ENCODE measurements at regions of chr17 and their contacts with region 1.

Region 1: DNA sequence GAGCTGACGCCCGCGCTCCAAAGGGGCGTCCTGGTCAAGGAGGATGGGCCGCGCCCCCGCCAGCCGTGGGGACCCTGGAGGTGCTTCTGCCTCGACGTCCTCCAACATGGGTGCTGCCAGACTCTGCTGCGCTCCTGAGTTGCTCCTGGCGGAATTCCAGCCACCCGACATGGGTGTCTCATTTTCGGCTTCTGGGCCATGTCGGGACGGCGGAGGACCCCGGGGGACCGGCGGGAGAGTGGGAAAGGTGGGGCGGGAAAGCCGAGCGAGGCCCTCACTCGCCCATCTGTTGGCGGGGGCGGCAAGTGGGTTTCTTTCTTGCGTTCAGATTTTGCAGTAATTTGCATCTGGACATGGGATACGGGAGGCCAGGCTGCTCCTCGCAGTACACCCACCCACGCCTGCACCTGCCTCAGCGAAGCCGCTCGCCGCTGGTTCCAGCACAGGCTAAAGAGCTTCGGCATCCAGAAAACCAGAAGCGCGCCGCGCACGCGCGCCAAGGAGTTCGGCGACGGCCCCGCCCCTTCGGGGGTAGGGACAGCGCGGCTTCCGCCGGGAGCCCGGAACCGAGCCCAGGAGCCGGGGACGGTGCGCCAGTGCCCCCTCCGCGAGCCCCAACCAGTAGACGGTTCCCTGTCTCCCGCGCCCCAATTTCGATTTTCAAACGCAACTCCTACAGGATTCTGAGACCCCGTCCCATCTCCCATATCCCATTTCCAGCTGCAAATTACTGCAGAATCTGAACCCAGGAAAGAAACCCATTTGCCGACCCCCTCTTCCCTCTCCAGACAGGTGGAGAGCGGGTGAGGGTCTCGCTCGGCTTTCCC is at the start of gene ARMC7:
- DNase-seq: peak; percentile 77 to 95 (median 91)
- ATAC-seq: peak; percentile 83
- H3K4me3 ChIP-seq: peak within 1 kb of the TSS; percentile 90 to 91
- H3K4me3 Mint-ChIP-seq: peak within 1 kb of the TSS; percentile 87
- H3K27ac ChIP-seq: peak within 1 kb of the TSS; percentile 42 to 75
- H3K27ac Mint-ChIP-seq: peak within 1 kb of the TSS; percentile 92
- H3K4me1 ChIP-seq: peaks cover 34% of the 10 kb centered on the region
- H3K4me1 Mint-ChIP-seq: peaks cover 33% of the 10 kb centered on the region
- H3K27me3 ChIP-seq: no peaks in the 10 kb centered on the region
- H3K27me3 Mint-ChIP-seq: no peaks in the 10 kb centered on the region
- CTCF ChIP-seq: no peak
- total RNA-seq, gene ARMC7: 2.0 to 3.0 TPM

Region 2: DNA sequence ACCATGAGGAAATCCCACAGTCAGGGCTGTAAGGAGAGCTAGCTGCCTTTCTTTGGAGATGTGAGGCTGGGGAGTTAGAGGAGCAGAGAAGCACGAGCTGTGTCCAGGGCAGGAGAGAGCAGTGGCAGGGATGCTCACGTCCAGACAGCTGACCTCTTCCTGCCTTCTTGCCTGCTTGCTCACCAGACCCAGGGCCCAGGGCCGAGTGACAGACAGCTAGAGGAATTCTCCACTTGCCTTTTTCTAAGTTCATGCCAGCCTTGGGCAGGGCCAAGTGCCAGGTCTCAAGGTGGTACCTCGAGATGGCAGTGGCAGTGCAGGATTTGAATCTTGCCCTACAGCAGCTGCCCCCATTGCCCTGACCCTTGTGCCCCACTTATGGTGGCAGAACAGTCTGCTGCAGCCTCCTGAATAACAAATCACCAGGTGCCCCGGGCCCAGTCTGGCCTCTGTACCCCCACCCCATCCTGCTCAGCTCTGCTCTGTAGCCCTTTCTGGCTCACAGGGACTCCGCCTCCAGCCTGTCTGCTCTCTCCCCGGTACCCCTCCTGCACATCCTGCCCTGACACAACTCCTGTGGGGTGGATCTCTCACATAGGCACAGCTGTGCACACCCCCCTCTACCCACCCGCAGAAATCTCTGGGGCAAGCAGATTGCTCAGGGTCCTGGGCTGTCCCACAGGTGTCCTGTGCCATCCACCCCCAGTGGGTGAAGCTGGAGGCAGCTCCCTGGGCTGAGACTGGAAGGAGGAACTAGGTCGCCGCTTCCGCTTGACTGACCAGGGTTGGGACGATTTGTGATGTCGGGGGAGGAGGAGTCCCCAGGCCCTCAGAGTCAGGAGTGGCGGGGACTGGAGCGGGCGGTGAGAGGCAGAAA is 275.9 kb before region 1 on chr17:
- CTCF ChIA-PET with region 1: no interaction called
- POLR2A ChIA-PET with region 1: no interaction called
- intact Hi-C with region 1: no loop called
- DNase-seq: no peak
- ATAC-seq: no peak
- H3K4me3 ChIP-seq: no peak overlapping the region
- H3K4me3 Mint-ChIP-seq: no peak overlapping the region
- H3K27ac ChIP-seq: no peak overlapping the region
- H3K27ac Mint-ChIP-seq: no peak overlapping the region
- H3K4me1 ChIP-seq: no peaks in the 10 kb centered on the region
- H3K4me1 Mint-ChIP-seq: no peaks in the 10 kb centered on the region
- H3K27me3 ChIP-seq: no peaks in the 10 kb centered on the region
- H3K27me3 Mint-ChIP-seq: no peaks in the 10 kb centered on the region
- CTCF ChIP-seq: no peak

Region 3: GRCh38 chr17:75046582-75047289 is 62.9 kb before region 1 on chr17 and contains the starts of genes ATP5PD and KCTD2:
- CTCF ChIA-PET with region 1: interaction called, 5 read pairs
- POLR2A ChIA-PET with region 1: interaction called, 6 read pairs
- intact Hi-C with region 1: loop called in 1 of 2 experiments (anchors 5 kb)
- DNase-seq: peak; percentile 81 to 97 (median 93)
- ATAC-seq: peak; percentile 91
- H3K4me3 ChIP-seq: peak within 1 kb of the TSS; percentile 99
- H3K4me3 Mint-ChIP-seq: peak within 1 kb of the TSS; percentile 99
- H3K27ac ChIP-seq: peak within 1 kb of the TSS; percentile 93 to 97
- H3K27ac Mint-ChIP-seq: peak within 1 kb of the TSS; percentile 98
- H3K4me1 ChIP-seq: peaks cover 21% of the 10 kb centered on the region
- H3K4me1 Mint-ChIP-seq: peaks cover 54% of the 10 kb centered on the region
- H3K27me3 ChIP-seq: no peaks in the 10 kb centered on the region
- H3K27me3 Mint-ChIP-seq: no peaks in the 10 kb centered on the region
- CTCF ChIP-seq: no peak
- total RNA-seq, gene ATP5PD: 69.9 to 71.6 TPM
- total RNA-seq, gene KCTD2: 29.4 to 31.7 TPM

Region 4: DNA sequence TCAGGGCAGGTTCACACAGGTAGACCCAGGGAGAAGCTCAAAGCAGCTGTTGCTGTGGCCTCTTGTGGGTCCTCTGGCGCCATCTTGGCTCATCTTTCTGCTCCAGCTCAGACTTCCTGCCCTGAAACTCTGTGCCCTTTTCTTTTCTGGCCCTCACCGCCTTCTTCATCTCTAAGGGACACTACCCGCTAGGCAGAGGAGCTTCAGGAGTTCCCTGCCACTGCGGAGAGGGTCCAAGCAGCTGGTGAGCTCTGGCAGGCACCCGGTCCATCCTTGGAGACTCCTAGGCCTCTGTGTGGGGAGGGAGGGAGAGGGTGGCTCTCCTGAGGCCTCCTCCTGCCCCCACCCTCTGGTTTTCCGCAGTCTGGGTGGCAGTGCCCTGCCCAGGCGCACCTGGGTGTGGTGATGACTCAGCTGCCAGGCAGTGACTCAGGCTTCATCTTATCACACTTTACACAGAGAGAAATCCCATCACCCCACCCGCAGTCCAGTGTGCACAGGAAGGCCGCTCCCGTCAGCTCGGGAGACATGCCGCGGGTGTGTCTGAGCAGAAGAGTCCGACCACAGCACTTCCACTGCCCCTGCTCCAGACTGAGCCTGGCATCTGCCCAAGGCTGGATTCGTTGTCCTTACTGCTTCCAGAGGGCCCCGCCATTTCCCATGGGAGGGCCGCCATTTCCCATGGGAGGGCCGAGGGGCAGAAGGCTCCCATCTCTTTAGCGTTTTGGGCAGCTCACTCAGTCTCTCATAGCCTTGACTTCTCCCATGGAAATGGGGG is 14.6 kb after region 1 on chr17:
- CTCF ChIA-PET with region 1: interaction called, 65 read pairs
- POLR2A ChIA-PET with region 1: interaction called, 32 read pairs
- intact Hi-C with region 1: no loop called
- DNase-seq: peak in 7 of 9 experiments; percentile 31 to 60 (median 38)
- ATAC-seq: peak; percentile 73
- H3K4me3 ChIP-seq: no peak overlapping the region
- H3K4me3 Mint-ChIP-seq: no peak overlapping the region
- H3K27ac ChIP-seq: no peak overlapping the region
- H3K27ac Mint-ChIP-seq: no peak overlapping the region
- H3K4me1 ChIP-seq: peaks cover 20% of the 10 kb centered on the region
- H3K4me1 Mint-ChIP-seq: peaks cover 21% of the 10 kb centered on the region
- H3K27me3 ChIP-seq: no peaks in the 10 kb centered on the region
- H3K27me3 Mint-ChIP-seq: no peaks in the 10 kb centered on the region
- CTCF ChIP-seq: no peak

Region 5: GRCh38 chr17:75173526-75173925 is 63.9 kb after region 1 on chr17:
- CTCF ChIA-PET with region 1: interaction called, 197 read pairs
- POLR2A ChIA-PET with region 1: interaction called, 27 read pairs
- intact Hi-C with region 1: loop called (anchors 1 kb)
- DNase-seq: no peak
- ATAC-seq: no peak
- H3K4me3 ChIP-seq: no peak overlapping the region
- H3K4me3 Mint-ChIP-seq: no peak overlapping the region
- H3K27ac ChIP-seq: no peak overlapping the region
- H3K27ac Mint-ChIP-seq: no peak overlapping the region
- H3K4me1 ChIP-seq: peaks cover 9% of the 10 kb centered on the region
- H3K4me1 Mint-ChIP-seq: peaks cover 19% of the 10 kb centered on the region
- H3K27me3 ChIP-seq: no peaks in the 10 kb centered on the region
- H3K27me3 Mint-ChIP-seq: no peaks in the 10 kb centered on the region
- CTCF ChIP-seq: no peak

Region 6: GRCh38 chr17:75238684-75239191 is 129.1 kb after region 1 on chr17:
- CTCF ChIA-PET with region 1: interaction called, 38 read pairs
- POLR2A ChIA-PET with region 1: no interaction called
- intact Hi-C with region 1: loop called (anchors 1 kb)
- DNase-seq: peak; percentile 24 to 78 (median 63)
- ATAC-seq: peak; percentile 47
- H3K4me3 ChIP-seq: no peak overlapping the region
- H3K4me3 Mint-ChIP-seq: no peak overlapping the region
- H3K27ac ChIP-seq: no peak overlapping the region
- H3K27ac Mint-ChIP-seq: peak overlapping the region; percentile 58
- H3K4me1 ChIP-seq: peaks cover 6% of the 10 kb centered on the region
- H3K4me1 Mint-ChIP-seq: peaks cover 24% of the 10 kb centered on the region
- H3K27me3 ChIP-seq: no peaks in the 10 kb centered on the region
- H3K27me3 Mint-ChIP-seq: no peaks in the 10 kb centered on the region
- CTCF ChIP-seq: peak; percentile 86

Region 7: DNA sequence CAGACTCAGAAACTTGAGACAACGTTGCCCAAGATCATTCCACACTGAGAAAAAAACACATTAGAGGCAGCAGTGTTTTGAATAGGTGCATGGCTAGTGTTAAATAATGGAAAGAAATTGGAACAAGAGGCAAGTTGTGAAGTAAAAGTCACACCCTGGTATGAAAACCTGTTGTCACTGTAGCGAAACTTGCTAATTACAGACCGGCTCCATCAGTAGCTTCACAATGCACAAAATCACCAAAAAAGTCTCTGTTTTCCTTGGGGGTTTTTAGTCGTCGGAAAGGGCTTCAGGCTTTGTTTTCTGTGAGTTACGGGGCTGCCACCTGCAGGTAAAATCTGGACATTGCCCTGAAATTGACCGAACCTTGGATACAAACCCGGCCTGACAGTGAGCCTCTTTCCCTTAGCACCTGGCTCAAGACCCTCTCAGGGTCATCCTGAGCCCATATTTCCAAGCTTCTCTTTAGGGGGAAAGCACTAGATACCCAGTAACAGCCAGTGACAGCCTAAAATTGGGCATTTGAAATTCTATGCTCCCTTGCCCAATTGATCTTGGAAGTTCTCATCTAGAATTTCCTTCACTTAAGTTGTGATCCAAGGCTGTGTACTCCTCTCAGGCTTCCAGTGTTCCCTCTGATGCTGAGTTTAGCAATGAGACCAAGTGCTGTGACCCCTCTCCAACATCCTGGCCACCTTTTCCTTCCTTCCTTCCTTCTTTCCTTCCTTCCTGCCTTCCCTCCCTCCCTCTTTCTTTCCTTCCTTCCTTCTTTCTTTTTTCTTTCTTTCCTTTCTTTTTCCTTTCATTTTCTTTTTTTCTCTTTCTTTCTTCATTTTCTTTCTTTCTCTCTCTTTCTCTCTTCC is 303.1 kb after region 1 on chr17:
- CTCF ChIA-PET with region 1: interaction called, 8 read pairs
- POLR2A ChIA-PET with region 1: interaction called, 4 read pairs
- intact Hi-C with region 1: loop called (anchors 1 kb)
- DNase-seq: peak; percentile 49 to 88 (median 73)
- ATAC-seq: peak; percentile 90
- H3K4me3 ChIP-seq: peak overlapping the region in 1 of 2 experiments; percentile 22
- H3K4me3 Mint-ChIP-seq: peak overlapping the region; percentile 72
- H3K27ac ChIP-seq: no peak overlapping the region
- H3K27ac Mint-ChIP-seq: peak overlapping the region; percentile 62
- H3K4me1 ChIP-seq: peaks cover 8% of the 10 kb centered on the region
- H3K4me1 Mint-ChIP-seq: peaks cover 16% of the 10 kb centered on the region
- H3K27me3 ChIP-seq: no peaks in the 10 kb centered on the region
- H3K27me3 Mint-ChIP-seq: no peaks in the 10 kb centered on the region
- CTCF ChIP-seq: peak; percentile 70